GM23248 (cell line): ENCODE measurements at regions of chr17 and their contacts with region 1.

Region 1: DNA sequence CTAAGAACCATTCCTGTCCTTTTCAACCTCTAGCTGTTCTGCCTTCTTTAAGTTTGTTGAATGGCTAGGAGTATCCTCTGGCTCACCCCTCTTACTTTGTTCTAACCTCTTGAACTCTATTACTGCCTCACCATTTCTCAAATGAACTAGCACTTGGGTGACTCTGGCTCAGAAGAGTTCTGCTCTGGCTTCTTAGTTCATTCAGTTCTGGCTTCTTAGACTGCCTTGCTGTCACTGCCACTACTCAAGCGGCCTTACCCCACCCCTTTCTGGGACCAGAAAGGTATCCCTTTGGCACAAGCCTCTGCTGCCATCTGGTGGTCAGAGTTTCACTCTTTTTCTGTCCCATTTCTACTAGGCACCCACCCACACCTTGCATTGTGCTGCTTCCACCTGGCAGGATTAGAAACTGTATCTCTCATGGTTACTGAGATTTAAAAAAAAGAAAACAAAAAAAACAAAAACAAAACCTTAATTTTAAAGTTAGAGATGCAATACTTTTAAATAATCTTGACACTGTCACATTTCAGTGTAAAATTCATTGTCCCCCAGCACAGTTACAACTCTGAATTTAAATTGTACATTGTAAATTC is 6.8 kb upstream of the ABCA10 start:
- DNase-seq: peak; percentile 83
- H3K4me3 ChIP-seq: no peak overlapping the region
- H3K27ac ChIP-seq: no peak overlapping the region
- H3K4me1 ChIP-seq: no peaks in the 10 kb centered on the region
- H3K27me3 ChIP-seq: no peaks in the 10 kb centered on the region

Region 2: DNA sequence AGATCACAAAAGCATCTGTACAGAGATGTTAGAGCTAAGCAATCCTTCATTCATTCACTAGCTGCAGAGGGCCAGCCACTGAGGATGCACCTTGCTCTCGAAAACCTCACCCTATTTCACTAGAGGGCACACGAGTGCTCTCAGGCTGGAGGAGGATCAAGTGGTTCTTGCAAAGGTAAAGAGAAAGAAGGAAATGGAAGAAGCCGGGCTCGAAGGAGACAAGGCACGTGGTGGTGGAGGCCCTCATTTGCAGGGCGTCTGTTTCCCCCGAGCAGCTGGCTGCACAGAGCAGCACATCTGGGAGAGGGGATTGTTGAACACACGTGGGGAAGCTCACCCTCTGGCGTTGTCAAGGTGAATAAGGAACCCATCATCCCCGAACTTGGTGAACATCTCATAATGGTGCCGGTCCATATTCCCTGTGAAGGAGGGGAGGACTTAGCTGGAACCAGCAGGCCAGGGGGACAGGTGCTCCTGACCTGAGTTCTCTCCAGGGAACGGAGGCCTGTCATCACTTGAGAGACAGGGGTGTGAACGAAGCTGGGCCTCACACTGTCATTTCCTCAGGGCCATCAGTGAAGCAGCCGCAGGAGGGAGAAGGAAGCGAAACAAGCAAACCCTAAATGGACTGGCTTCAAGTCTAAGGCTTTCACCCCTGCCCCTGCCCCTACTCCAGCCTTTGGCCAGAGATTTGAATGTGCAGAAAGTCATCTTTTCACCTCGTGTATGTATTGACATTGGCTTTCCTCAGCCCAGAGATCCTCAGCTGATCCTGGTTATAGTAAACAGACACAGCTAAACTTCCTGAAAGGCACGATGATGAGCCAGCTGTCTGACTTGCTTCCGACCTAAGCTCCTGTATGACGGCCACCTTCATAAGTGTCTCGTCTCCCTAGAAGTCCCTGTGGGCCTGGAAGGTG is 695.6 kb before region 1 on chr17:
- in situ Hi-C with region 1: loop called (anchors 25 kb)
- DNase-seq: peak; percentile 34
- H3K4me3 ChIP-seq: no peak overlapping the region
- H3K27ac ChIP-seq: no peak overlapping the region
- H3K4me1 ChIP-seq: no peaks in the 10 kb centered on the region
- H3K27me3 ChIP-seq: no peaks in the 10 kb centered on the region

Region 3: DNA sequence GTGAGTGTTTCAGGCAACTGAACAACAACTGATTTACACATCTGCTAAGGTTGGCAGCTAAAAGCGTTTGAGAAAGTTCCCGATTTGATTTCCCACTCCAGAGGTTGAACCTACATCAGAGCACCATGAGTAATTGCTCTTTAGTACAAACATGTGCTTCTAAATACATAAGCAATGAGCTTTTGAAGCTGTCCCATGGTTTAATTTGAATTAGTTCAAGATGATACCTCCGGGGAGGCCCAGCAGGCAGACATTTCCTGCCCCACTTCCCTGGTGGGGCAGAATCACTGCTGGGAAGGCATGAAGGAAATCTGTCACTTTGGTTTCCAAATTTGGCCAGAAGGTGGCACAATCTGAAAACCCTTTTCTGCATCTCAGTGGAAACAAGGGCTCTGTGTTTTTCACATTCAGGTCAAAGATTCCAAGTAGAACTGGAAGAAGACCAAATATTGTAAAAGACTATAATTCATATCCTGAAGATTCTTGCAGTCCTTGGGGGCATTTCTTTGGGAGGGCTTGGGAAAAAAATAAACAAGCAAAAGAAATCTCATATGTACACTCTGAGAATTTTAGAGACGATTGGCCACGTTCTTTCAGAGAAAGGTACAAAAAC is 458.1 kb before region 1 on chr17:
- in situ Hi-C with region 1: loop called (anchors 5 kb)
- DNase-seq: peak; percentile 77
- H3K4me3 ChIP-seq: no peak overlapping the region
- H3K27ac ChIP-seq: peak overlapping the region; percentile 21; the same call in 1 of the 2 replicates
- H3K4me1 ChIP-seq: peaks cover 31% of the 10 kb centered on the region
- H3K27me3 ChIP-seq: no peaks in the 10 kb centered on the region

Region 4: GRCh38 chr17:68972119-68972704 is 263.2 kb before region 1 on chr17:
- in situ Hi-C with region 1: loop called (anchors 5 kb)
- DNase-seq: peak; percentile 68
- H3K4me3 ChIP-seq: no peak overlapping the region
- H3K27ac ChIP-seq: no peak overlapping the region
- H3K4me1 ChIP-seq: no peaks in the 10 kb centered on the region
- H3K27me3 ChIP-seq: no peaks in the 10 kb centered on the region

Region 5: DNA sequence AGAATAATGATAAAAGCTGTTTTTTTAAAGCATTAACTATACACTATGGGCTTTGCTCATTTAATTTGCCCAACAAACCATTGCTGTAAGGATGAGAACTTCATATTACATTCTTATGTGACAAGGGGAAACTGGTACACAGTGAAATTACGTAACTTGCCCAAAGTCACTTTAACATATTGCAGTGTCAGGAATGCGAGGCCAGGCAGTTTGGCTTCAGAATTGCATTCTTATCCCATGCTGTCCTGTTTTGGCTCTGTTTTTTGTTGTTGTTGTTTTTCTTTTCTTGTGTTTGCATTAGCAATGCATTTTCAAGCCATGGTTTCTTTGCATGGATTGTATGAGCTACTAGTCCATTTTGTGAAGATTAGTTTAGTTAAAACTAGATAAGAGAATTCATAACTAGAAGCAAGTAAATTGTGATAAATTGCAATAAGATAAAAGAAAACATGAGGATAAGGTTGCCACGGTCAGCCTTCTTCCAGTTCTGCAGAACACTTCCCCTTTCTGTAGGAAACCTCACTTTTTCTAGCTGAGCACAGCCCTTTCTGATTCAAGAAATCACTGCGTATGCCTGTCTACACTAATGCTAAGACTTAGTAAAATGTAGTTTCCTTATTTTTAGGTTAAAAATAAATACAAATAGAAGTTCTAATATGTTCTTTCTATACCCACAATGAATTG is 618.2 kb after region 1 on chr17:
- in situ Hi-C with region 1: no loop called
- DNase-seq: peak; percentile 56
- H3K4me3 ChIP-seq: no peak overlapping the region
- H3K27ac ChIP-seq: no peak overlapping the region
- H3K4me1 ChIP-seq: peaks cover 28% of the 10 kb centered on the region
- H3K27me3 ChIP-seq: no peaks in the 10 kb centered on the region

Region 6: GRCh38 chr17:69961501-69962145 is 726.2 kb after region 1 on chr17:
- in situ Hi-C with region 1: no loop called
- DNase-seq: no peak
- H3K4me3 ChIP-seq: no peak overlapping the region
- H3K27ac ChIP-seq: no peak overlapping the region
- H3K4me1 ChIP-seq: no peaks in the 10 kb centered on the region
- H3K27me3 ChIP-seq: peaks cover 10% of the 10 kb centered on the region